GM12878 (cell line): ENCODE measurements at regions of chr10 and their contacts with region 1.

Region 1: DNA sequence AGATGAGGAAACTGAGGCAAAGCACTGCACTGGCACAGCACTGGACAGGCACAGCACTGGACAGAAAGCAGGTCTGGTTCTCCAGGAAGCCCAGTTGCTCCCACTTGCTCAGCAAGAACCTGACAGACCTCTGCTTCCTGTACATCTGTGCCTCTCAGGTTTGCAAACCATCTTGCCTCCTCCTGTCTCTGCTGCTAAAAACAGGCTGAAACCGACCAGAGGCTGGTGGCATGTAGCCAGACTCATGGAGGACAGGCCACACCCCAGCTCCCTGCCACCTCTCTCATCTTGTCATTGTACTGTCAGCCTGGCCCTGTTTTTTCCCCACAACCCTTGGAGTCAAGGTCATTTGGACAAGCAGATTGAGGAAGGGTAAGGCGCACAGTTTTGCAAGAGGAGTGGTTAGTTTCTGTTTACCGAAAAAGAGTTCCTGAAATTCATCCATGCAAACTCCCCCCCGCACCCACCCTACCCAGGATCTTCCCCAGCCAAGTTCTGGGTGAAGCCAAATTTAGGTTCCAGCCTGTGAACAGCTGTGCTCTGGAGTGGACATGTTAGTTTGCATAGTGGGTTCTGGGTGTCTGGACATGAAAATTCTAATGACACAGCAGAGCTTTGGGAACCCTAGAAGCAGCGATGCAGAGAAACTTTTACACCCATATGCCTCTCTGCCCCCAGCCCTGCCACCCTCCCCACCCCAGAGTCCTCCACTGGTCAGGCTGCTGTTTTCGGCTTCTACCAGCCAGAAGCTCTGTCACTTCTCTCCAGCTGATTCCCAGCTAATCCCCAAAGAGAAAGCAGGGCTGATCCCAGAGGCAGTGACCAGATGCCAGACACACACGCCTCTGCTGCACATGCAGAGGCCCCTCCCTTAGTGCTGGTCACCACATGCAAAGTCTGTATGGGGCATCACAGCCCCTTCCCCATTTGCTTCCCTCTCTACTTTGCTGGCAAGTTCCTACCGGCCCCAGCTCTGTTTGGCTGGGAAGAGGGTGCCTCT is 8.5 kb upstream of the C10orf105 start:
- DNase-seq: peak; percentile 90
- ATAC-seq: peak; percentile 76
- H3K4me3 ChIP-seq: peak overlapping the region; percentile 13; the same call in 1 of the 2 replicates
- H3K27ac ChIP-seq: peak overlapping the region; percentile 81
- H3K4me1 ChIP-seq: peaks cover 48% of the 10 kb centered on the region
- H3K27me3 ChIP-seq: no peaks in the 10 kb centered on the region
- CTCF ChIP-seq: no peak
- EP300 ChIP-seq: no peak
- POLR2A ChIP-seq: peak; percentile 79
- RAD21 ChIP-seq: no peak

Region 2: DNA sequence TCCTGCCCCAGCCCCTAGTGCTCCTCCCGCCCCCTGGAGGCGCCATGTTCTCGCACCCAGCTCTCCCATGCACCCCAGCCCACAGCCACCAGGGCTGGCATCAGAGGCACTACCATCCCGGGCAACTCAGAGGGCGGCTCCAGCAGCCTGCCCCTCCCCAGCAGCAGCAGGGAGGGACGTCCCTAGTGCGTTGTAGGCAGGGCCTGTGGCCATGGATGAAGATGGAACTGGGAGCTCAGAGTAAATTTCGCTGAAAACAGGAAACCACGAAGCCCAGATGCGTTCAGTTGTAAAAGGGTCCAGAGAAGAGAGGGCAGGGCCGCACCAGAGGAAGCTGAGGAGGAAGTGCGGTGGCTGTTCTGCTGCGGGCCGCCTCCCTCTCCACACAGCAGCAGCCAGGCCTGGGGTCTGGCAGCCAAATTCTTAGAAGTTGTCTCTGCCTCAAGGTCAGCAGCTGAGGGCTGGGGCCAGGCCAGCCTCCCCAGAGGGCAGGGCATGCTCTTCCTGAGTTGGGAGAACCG is 20.7 kb after region 1 on chr10:
- CTCF ChIA-PET with region 1: interaction called, 6 read pairs
- POLR2A ChIA-PET with region 1: interaction called, 6 read pairs
- RAD21 ChIA-PET with region 1: interaction called, 5 read pairs
- SMC1A ChIA-PET with region 1: interaction called, 5 read pairs
- in situ Hi-C with region 1: no loop called
- intact Hi-C with region 1: loop called (anchors 1 kb)
- DNase-seq: peak; percentile 58
- ATAC-seq: peak; percentile 75
- H3K4me3 ChIP-seq: no peak overlapping the region; the same call in 1 of the 2 replicates
- H3K27ac ChIP-seq: peak overlapping the region; percentile 77
- H3K4me1 ChIP-seq: peaks cover 51% of the 10 kb centered on the region
- H3K27me3 ChIP-seq: no peaks in the 10 kb centered on the region
- CTCF ChIP-seq: peak in 1 of 3 experiments; percentile 15; a peak in 1 of 6 replicates
- EP300 ChIP-seq: no peak
- POLR2A ChIP-seq: peak; percentile 46; the same call in 1 of the 2 replicates
- RAD21 ChIP-seq: no peak

Region 3: GRCh38 chr10:71766702-71767419 is 38.8 kb after region 1 on chr10:
- CTCF ChIA-PET with region 1: interaction called, 40 read pairs
- POLR2A ChIA-PET with region 1: interaction called, 7 read pairs
- RAD21 ChIA-PET with region 1: interaction called, 19 read pairs
- SMC1A ChIA-PET with region 1: interaction called, 33 read pairs
- in situ Hi-C with region 1: no loop called
- intact Hi-C with region 1: loop called (anchors 1 kb)
- DNase-seq: no peak
- ATAC-seq: peak; percentile 12
- H3K4me3 ChIP-seq: no peak overlapping the region
- H3K27ac ChIP-seq: no peak overlapping the region
- H3K4me1 ChIP-seq: peaks cover 32% of the 10 kb centered on the region
- H3K27me3 ChIP-seq: no peaks in the 10 kb centered on the region
- CTCF ChIP-seq: no peak
- EP300 ChIP-seq: no peak
- POLR2A ChIP-seq: no peak
- RAD21 ChIP-seq: no peak

Region 4: GRCh38 chr10:71812016-71812912 is 84.2 kb after region 1 on chr10:
- CTCF ChIA-PET with region 1: interaction called, 5 read pairs
- POLR2A ChIA-PET with region 1: no interaction called
- RAD21 ChIA-PET with region 1: interaction called, 3 read pairs
- SMC1A ChIA-PET with region 1: interaction called, 4 read pairs
- in situ Hi-C with region 1: no loop called
- intact Hi-C with region 1: loop called (anchors 1 kb)
- DNase-seq: no peak
- ATAC-seq: peak; percentile 99
- H3K4me3 ChIP-seq: no peak overlapping the region
- H3K27ac ChIP-seq: no peak overlapping the region
- H3K4me1 ChIP-seq: peaks cover 3% of the 10 kb centered on the region; the same call in 1 of the 2 replicates
- H3K27me3 ChIP-seq: no peaks in the 10 kb centered on the region
- CTCF ChIP-seq: peak; percentile 81 to 89 (median 82)
- EP300 ChIP-seq: no peak
- POLR2A ChIP-seq: peak; percentile 32; the same call in 1 of the 2 replicates
- RAD21 ChIP-seq: peak; percentile 84